ENCODE measurements at regions of chr2 and their contacts with region 1.

Region 1: DNA sequence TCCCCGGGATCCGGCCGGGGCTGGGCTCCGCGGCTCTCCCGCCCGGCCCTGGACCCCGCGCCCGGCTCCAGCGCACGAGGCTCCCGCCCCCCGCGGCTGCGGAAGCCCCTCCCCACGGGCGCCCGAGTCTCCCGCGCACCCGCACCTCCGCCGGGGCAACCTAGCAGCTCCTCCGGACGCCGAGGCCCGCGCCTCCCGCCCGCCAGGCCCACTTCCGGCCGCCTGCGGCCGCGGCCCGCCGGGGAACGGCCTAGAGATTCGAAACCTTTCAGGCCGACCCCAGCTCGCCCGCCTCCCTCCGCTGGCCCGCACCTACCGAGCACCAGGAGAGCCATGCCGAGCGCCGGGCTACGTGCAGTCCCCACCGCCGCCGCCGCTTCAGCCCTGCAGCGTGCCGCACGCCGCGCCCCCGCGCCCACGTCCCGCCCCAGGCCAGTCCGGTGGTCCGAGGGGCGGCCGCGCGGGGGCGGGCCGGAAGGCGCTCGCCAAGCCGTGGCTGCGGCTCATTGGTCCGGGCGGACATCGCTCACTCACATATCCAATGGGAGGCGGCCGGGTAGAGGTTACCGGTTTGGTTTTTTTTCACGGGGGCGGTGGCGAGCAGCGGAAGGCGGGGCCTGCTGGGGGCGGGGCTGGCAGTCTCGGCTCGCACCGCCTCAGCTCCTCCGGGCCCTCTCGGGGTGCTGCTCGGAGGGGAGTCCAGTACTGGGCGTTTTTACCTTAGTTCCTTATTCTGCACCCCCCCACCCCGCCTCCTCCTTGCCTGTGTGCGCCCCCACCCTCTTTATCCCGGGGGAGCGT is at the start of gene PDIA6:
- DNase-seq: peak; percentile 99
- H3K4me3 ChIP-seq: peak within 1 kb of the TSS; percentile 84 to 98 (median 92)
- H3K27ac ChIP-seq: peak within 1 kb of the TSS; percentile 91 to 98 (median 96)
- H3K4me1 ChIP-seq: peaks cover 26 to 48% (median 38%) of the 10 kb centered on the region in 4 donors
- H3K27me3 ChIP-seq: no peaks in the 10 kb centered on the region
- CTCF ChIP-seq: peak in 2 of 3 experiments; percentile 33 to 35
- EP300 ChIP-seq: no peak
- POLR2A ChIP-seq: peak; percentile 47
- total RNA-seq, gene PDIA6: 64.8 to 99.7 (median 85.3) TPM

Region 2: GRCh38 chr2:10691521-10691920 is 121.0 kb before region 1 on chr2:
- intact Hi-C with region 1: loop called (anchors 5 kb)
- DNase-seq: no peak
- H3K4me3 ChIP-seq: no peak overlapping the region
- H3K27ac ChIP-seq: no peak overlapping the region
- H3K4me1 ChIP-seq: peaks cover 22 to 35% (median 32%) of the 10 kb centered on the region in 4 donors
- H3K27me3 ChIP-seq: no peaks in the 10 kb centered on the region
- CTCF ChIP-seq: no peak
- EP300 ChIP-seq: no peak
- POLR2A ChIP-seq: no peak

Region 3: DNA sequence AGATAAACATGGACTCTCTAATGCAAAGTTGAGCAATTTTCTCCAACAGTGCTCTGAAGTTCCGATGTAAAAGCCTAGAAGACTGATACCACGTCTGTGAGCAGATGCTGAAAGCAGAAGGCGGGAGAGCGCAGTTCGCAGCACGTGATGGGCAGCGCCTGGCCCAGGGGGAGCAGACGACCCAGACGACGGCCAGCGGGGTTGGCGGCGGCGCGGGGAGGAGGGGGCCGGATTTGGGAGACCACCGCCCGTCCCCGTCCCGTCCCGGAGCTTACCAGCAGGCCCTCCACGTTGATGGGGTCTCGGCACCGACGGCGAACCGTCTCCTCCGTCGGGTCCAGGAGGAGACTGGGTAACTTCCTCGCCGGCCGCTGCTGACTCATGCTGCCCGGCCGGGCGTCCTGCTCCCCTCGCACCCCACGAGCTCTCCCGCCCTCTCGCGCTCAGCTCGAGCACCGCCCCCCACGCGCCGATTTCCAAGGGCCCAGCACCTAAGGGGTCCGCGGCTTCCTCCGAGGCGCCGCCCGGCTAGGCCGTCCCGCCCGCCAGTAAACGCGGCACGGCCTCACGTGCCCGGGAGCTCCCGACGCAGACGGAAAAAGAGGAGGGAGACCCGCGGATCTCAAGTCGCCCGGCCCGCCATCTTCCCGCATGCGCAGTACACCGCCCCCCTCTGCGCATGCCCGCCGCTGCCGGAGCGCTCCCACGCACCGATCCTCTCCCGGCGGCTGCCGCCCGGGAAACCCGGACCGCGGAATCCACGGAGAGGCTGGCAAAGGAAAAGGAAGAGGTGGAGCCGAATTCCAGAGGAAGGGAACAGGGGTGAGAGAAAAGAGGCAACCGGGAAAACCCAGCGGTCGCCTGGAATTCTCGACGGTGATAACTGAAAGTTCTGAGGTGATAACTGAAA is 653.2 kb after region 1 on chr2 and contains the start of gene E2F6:
- intact Hi-C with region 1: loop called (anchors 10 kb)
- DNase-seq: peak; percentile 96
- H3K4me3 ChIP-seq: peak within 1 kb of the TSS; percentile 57 to 79 (median 74)
- H3K27ac ChIP-seq: peak within 1 kb of the TSS; percentile 90 to 96 (median 93)
- H3K4me1 ChIP-seq: peaks cover 27 to 55% (median 53%) of the 10 kb centered on the region in 4 donors
- H3K27me3 ChIP-seq: no peaks in the 10 kb centered on the region
- CTCF ChIP-seq: peak in 1 of 3 experiments; percentile 39
- EP300 ChIP-seq: no peak
- POLR2A ChIP-seq: peak; percentile 81
- total RNA-seq, gene E2F6: 10.9 to 18.0 (median 17.0) TPM